Activated naive CD4-positive, alpha-beta T cell treated with anti-CD3 and anti-CD28 coated beads for 36 hours (primary cell): ENCODE measurements at regions of chr5 and their contacts with region 1.

Region 1: DNA sequence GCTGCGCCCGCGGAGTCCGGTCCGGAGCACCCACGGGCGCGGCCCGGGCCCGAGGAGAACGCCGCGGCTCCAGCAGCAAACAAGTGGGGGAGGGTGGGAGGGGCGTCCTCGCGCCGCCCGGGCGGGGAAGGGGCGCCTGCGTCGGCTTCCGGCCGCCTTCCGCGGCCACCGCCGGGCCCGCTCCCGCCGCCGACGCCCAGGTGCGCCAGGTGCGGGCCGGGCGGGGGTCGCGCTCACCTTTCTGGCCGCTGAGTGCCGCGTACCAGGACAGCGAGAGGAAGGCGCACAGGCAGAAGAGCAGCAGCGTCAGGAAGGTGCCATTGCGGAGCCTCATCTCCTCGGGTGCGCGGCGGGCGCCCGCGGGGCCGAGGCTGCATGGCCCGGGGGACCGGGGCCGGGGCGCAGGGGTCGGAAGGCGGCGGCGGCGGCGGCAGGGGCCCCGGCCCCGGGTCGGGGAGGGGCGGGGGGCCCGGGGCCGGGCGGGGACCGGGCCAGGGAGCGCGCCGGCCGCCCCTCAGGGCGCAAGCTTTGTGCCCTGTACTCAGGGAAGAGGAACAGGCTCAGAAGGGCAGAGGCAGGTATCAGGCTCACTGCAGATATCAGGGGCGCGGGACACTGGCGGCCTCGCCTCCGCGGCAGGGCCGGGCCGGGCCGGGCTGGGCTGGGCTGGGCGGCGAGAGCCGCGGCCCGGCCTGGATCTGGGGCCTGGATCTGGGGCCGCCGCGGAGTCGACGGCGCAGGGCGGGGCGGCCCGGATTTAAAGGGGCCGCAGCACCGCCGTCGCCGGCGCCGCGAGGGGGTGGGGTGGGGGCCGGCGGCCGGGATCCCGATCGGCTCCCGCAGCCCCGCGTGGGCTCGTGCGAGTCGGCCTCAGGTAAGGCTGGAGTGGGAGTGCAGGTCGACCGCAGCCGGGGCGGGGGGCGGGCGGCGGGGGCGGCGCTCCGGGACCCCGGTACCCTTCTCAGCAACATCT is at the start of gene MGAT4B:
- DNase-seq: peak; percentile 62
- H3K4me3 Mint-ChIP-seq: peak within 1 kb of the TSS; percentile 84
- H3K27ac Mint-ChIP-seq: no peak within 1 kb of the TSS
- H3K4me1 Mint-ChIP-seq: peaks cover 38% of the 10 kb centered on the region
- H3K27me3 Mint-ChIP-seq: no peaks in the 10 kb centered on the region
- total RNA-seq, gene MGAT4B: 57.7 to 59.9 TPM

Region 2: GRCh38 chr5:179836225-179837019 is 29.9 kb after region 1 on chr5:
- CTCF ChIA-PET with region 1: interaction called, 5 read pairs
- intact Hi-C with region 1: loop called (anchors 1 kb)
- DNase-seq: peak; percentile 79
- H3K4me3 Mint-ChIP-seq: peak overlapping the region; percentile 9
- H3K27ac Mint-ChIP-seq: peak overlapping the region; percentile 77
- H3K4me1 Mint-ChIP-seq: peaks cover 17% of the 10 kb centered on the region
- H3K27me3 Mint-ChIP-seq: no peaks in the 10 kb centered on the region